Gastrocnemius medialis (tissue), 4 donors: ENCODE measurements at regions of chr17 and their contacts with region 1.

Region 1: DNA sequence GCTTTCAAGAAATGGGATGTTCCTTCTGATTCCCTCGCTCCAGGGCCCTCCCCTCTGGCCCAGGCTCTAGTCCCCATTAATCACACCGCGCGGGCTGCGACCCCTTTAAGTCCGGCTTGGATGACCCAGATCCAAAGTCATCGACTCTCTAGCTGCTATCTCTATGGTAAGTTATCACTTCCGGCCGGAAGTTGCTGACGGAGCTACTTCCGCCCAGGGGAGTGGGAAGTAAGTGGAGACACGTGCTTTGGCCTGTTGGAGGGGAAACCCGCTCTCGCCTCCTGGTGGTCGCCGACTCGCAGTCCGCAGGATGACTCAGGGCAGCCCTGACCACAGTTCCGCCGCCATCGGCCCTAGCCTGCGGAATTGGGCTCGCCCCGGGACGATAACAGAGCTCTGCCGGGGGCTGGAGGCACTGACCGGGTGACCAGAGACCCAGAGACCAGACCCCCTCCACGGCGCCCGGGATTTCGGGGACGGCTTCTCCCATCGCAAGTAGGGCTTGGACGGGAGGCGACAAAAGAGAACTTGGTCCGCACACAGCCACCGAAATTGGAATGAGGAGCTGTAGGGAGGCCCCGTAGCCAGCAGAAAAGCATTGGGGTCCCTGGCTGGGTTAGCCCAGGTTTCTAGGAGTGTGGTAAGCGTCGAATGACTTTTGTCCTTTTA is 52.2 kb upstream of the SEC14L1 start:
- DNase-seq: peak; percentile 87 to 89
- ATAC-seq: peak; percentile 96
- H3K4me3 ChIP-seq: peak overlapping the region; percentile 73 to 85 (median 76)
- H3K27ac ChIP-seq: peak overlapping the region; percentile 89 to 94 (median 90)
- H3K4me1 ChIP-seq: peaks cover 30 to 32% of the 10 kb centered on the region in 2 donors
- H3K27me3 ChIP-seq: no peaks in the 10 kb centered on the region
- CTCF ChIP-seq: peak; percentile 73 to 89 (median 78)
- POLR2A ChIP-seq: peak; percentile 81 to 82

Region 2: DNA sequence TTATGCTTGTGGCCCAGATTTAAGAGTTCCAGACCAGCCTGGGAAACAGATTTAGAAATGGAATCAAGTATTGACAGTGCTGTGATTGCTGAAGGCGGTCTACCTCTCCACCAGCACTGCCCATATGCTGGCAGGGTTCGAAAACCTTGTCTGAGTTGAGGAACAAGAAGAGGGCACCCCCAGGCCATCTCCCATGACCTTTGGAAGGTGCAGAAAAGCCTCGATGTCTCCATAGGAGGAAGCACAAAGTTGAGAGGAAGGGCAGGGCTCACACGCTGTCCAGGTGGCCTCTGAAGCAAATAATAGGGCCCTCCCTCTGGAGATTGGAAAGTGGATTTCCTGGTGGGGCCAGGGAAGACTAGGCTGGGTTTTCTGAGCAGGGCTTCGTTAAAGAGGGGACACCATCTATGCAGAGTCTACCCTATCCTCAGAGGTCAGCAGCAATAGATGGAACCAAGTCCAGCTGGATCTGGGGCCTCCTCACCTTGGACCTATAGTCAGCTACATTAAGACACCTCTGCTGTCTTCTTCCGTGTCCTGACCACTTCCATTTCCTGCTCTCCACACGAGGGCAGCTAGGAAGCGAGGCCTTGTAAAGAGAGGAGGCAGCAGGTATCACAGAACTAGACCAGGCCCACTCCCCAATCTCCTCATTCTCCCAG is 430.5 kb before region 1 on chr17:
- in situ Hi-C with region 1: no loop called
- intact Hi-C with region 1: no loop called
- DNase-seq: no peak
- ATAC-seq: no peak
- H3K4me3 ChIP-seq: no peak overlapping the region
- H3K27ac ChIP-seq: no peak overlapping the region
- H3K4me1 ChIP-seq: peaks cover 0 to 15% of the 10 kb centered on the region in 2 donors
- H3K27me3 ChIP-seq: no peaks in the 10 kb centered on the region
- CTCF ChIP-seq: no peak
- POLR2A ChIP-seq: no peak

Region 3: DNA sequence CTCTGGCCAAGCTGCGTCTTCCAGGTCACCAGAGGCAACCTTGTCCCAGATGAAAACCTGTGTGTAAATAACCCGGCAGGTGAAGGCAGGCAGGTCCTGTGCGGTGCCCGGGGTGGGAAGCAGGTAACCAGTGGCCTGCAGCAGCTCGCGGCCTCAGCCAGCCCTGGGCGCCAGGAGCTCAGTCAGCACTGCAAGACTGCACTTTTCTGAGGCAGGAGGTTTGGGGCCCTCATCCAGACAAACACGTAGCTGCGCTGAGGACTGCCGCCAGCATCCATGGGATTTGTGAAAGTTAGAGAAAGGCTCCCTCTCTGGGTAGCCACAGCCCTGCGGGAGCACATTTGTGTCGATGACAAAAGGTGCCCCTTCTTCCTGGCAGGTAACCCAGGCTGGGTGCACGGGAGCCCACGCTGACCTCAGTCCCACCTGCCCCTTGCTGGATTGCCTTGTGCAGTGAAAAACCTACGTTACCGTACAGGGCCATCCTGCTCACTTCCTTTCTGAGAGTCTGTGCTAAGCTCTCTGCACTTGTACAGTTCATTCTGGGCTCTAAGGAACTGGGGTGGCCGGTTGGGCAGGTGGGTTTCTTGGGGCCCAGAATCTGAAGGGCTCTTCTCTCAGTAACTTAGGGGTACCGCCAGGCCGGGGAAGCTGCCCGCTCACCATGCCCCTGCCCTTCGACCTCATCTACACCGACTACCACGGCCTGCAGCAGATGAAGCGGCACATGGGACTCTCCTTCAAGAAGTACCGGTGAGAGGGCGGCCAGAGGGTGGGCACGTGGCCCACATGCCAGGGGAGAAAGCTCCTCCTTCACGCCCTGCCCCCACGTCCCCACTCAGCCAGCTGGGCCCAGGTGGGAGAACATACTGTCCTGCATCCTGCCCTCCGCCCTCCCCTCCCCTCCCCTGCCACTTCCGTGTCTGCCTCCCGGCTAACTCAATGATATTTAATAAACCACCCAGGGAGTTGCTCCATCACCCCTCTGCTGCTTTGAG is 163.9 kb before region 1 on chr17:
- in situ Hi-C with region 1: no loop called
- intact Hi-C with region 1: no loop called
- DNase-seq: no peak
- ATAC-seq: no peak
- H3K4me3 ChIP-seq: no peak overlapping the region
- H3K27ac ChIP-seq: no peak overlapping the region
- H3K4me1 ChIP-seq: no peaks in the 10 kb centered on the region
- H3K27me3 ChIP-seq: peaks cover 0 to 16% (median 5%) of the 10 kb centered on the region in 3 donors
- CTCF ChIP-seq: no peak
- POLR2A ChIP-seq: no peak

Region 4: DNA sequence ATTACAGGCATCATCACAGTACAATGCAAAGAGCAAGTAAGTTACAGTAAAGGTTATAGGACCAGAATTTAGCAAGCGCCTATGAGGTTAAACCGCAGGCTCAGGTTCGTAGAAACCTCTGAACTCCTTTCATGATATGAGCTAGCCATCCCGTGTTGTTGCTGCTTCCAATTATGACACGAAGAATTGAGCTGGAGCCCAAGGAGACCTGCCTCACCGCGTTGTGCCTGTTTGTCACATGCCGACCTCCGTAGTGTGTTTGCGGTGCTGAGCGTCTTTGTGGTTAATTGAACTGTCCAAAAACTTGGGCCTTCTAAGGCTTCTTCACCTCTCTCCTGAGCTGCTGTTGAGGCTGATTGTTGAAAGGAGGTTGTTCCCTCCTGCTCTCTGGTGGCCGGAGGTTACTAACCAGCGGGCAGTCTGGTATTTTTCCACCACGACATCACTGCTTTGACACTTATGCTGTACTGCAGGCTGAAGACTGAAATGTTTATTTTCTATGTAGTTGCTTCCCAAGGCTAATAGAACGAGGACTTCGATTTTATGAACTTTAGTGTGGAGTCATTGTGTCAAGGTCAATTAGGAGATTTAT is 119.7 kb after region 1 on chr17:
- in situ Hi-C with region 1: loop called in 1 of 4 experiments (anchors 10 kb)
- intact Hi-C with region 1: loop called (anchors 2 kb)
- DNase-seq: peak; percentile 68 to 77
- ATAC-seq: peak; percentile 80 to 93
- H3K4me3 ChIP-seq: no peak overlapping the region
- H3K27ac ChIP-seq: peak overlapping the region; percentile 73 to 86 (median 80)
- H3K4me1 ChIP-seq: peaks cover 32 to 38% of the 10 kb centered on the region in 2 donors
- H3K27me3 ChIP-seq: no peaks in the 10 kb centered on the region
- CTCF ChIP-seq: peak; percentile 41 to 50 (median 47)
- POLR2A ChIP-seq: no peak

Region 5: DNA sequence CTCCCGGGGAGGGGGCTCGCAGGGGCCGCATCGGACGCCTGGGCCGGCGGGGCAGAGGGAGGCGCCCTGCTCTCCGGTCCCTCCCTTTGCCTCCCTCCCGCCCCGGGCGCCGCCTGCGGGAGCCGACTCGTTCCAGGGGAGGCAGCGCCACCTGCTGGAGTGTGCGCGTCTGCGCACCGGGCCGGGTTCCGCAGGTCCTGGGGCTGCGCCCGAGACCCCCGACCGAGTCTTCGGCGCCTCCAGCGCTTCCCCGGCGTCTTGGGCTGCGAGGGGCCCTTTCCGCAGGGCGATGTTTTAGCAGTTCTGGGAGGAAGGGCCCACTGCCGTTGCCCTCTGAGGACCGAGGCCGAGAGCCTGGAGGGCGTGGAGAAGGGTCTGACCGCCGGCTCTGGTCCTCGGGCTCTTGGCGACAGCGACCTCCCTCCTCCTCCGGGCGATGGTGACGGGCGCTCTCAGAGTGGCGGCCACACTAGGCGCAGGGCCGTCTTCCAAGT is 158.5 kb after region 1 on chr17:
- in situ Hi-C with region 1: loop called (anchors 5 kb)
- intact Hi-C with region 1: loop called (anchors 1 kb)
- DNase-seq: peak; percentile 60 to 63
- ATAC-seq: peak; percentile 79 to 90
- H3K4me3 ChIP-seq: peak overlapping the region; percentile 58 to 70 (median 60)
- H3K27ac ChIP-seq: peak overlapping the region in 2 of 4 donors; percentile 37 to 45
- H3K4me1 ChIP-seq: peaks cover 6 to 11% of the 10 kb centered on the region in 2 donors
- H3K27me3 ChIP-seq: no peaks in the 10 kb centered on the region
- CTCF ChIP-seq: peak; percentile 99
- POLR2A ChIP-seq: no peak

Region 6: GRCh38 chr17:77254951-77255825 is 166.6 kb after region 1 on chr17:
- in situ Hi-C with region 1: loop called in 2 of 4 experiments (anchors 5 kb)
- intact Hi-C with region 1: no loop called
- DNase-seq: no peak
- ATAC-seq: no peak
- H3K4me3 ChIP-seq: no peak overlapping the region
- H3K27ac ChIP-seq: no peak overlapping the region
- H3K4me1 ChIP-seq: no peaks in the 10 kb centered on the region
- H3K27me3 ChIP-seq: no peaks in the 10 kb centered on the region
- CTCF ChIP-seq: no peak
- POLR2A ChIP-seq: no peak